Ovary (tissue), 10 donors: ENCODE measurements at regions of chr5 and their contacts with region 1.

Region 1: DNA sequence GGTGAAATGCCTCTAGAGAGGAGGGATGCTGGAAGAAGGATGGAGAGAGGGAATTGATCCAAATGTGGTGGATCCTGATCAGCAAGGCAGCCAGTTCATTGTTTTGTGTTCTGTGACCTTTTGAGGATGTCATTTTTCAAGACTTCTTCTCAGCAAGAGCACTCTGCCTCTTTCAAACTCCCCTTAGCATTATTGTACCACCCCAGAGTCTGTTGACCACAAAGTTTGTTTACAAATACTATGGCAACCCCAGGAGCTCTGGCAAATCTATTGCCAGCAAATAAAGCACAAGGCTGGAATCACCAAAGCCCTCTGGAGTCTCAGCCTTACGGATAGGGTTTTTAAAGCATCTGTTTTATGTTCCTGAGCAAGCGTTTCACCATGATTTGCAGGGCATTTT is 76.2 kb upstream of the SLC1A3 start:
- DNase-seq: no peak
- H3K4me3 ChIP-seq: no peak overlapping the region
- H3K27ac ChIP-seq: no peak overlapping the region
- H3K4me1 ChIP-seq: no peaks in the 10 kb centered on the region
- H3K27me3 ChIP-seq: no peaks in the 10 kb centered on the region
- CTCF ChIP-seq: no peak
- EP300 ChIP-seq: no peak
- POLR2A ChIP-seq: no peak

Region 2: DNA sequence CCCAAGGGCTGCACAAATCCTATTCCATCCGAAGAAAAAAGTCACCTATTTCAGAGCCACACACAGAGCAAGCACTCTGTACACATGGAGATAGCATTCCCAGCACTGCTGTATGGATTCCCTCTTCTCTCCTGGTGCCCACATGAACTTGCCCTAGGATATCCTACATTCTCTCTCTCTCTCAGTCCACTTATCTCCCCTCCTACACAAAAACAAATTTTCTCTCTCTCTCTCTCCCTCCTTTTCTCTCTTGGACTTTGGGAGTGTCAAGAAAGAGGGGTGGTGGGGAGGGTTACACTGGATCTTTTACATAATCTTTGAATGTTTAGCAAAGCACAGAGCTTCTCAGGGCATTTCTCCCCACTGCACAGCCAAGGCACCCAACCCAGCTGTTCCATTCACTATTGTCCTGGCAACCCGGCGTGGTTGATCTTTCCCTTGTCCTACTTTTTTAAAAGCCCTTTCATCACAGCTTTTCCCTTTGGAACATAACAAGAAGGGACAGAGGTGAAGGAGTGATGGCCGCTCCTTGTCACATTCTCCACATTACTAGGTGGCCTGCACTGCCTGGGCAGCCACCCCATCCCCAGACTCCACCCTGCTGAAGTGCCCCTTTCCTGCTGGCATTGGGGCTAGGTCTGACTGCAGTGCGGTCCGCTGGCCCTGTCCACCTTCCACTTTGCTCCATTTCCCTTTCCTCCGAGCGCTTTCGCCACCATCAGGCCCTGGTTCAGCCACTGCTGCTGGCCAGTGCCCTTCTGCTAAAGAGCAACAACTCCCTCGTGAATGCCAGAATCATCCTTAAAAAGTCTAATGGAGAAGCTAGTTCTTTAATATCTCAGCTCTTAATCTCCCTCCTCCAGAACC is 54.0 kb after region 1 on chr5:
- intact Hi-C with region 1: no loop called
- DNase-seq: no peak
- H3K4me3 ChIP-seq: no peak overlapping the region
- H3K27ac ChIP-seq: no peak overlapping the region
- H3K4me1 ChIP-seq: no peaks in the 10 kb centered on the region
- H3K27me3 ChIP-seq: no peaks in the 10 kb centered on the region
- CTCF ChIP-seq: no peak
- EP300 ChIP-seq: no peak
- POLR2A ChIP-seq: no peak

Region 3: DNA sequence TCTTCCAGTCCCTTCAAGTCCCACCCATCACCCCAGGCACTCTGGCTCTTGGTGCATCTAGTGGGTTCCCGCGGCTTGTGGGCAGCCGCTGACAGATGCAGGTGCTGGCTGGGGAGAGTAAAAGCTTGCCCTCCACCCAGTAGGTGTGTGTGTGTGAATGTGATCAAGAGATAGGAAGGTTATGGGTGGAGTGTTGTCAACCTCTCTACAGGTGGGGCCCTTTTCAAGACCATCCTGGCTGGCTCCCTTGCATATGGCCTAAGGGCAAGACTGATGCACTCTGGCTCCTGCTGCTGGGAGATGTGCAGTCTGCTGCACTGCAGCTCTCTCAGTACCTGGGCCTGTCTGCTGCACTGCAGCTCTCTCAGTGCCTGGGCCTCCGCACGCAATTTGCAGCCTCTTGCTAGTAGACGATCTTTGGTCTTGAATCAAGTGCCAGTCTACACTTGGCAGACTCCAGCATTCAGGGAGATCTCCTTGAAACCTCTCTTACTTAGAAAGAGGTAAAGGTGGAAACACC is 1499.3 kb after region 1 on chr5:
- intact Hi-C with region 1: loop called in 1 of 4 experiments (anchors 5 kb)
- DNase-seq: no peak
- H3K4me3 ChIP-seq: no peak overlapping the region
- H3K27ac ChIP-seq: no peak overlapping the region
- H3K4me1 ChIP-seq: no peaks in the 10 kb centered on the region
- H3K27me3 ChIP-seq: no peaks in the 10 kb centered on the region
- CTCF ChIP-seq: no peak
- EP300 ChIP-seq: no peak
- POLR2A ChIP-seq: no peak